Left ventricle myocardium inferior (tissue), 1 donor: ENCODE measurements at regions of chr16 and their contacts with region 1.

Region 1: GRCh38 chr16:17467923-17468540 is 2.7 kb downstream of the XYLT1 start:
- DNase-seq: peak; percentile 54
- H3K4me3 ChIP-seq: no peak overlapping the region
- H3K27ac ChIP-seq: no peak overlapping the region
- H3K4me1 ChIP-seq: peaks cover 24% of the 10 kb centered on the region
- H3K27me3 ChIP-seq: peaks cover 69% of the 10 kb centered on the region
- CTCF ChIP-seq: peak; percentile 70

Region 2: DNA sequence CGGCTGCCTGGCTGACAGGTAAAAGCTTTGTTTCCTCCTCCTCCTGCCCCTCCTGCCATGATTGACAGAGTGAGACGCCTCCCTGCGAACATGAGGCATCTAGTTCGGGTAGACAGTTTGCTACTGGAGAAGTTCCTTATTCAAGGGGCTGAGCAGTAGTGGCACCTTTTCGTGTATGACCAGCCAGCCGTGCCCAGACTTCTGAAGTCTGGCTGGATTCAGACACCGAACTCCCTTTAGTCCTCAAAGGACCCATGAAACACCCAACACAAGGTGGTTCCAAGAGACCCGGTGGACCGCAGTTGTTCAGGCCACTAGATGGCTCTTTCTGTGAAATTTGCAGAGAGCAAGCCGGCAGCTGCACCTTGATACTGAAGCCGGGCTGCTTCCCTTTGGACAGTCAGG is 190.1 kb before region 1 on chr16:
- intact Hi-C with region 1: loop called (anchors 10 kb)
- DNase-seq: no peak
- H3K4me3 ChIP-seq: no peak overlapping the region
- H3K27ac ChIP-seq: no peak overlapping the region
- H3K4me1 ChIP-seq: no peaks in the 10 kb centered on the region
- H3K27me3 ChIP-seq: peaks cover 14% of the 10 kb centered on the region
- CTCF ChIP-seq: peak; percentile 65

Region 3: DNA sequence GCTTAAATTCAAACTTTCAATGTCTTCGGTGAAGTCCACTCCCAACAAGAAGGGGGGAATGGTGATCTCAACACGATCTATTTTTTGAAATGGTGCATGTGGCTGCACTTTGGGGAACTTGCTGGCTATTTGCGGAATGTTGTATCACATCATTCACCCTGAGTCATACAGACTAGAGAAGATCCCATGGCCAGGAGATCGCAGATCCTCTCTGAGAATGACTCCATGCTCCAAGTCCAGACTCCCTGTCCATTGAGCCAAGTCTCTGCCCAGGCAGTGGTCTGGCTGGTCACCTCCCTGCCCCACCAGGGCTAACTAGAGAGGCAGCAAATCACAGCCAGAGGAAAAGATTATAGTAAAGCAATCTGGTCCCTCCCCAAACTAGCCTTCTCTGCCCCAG is 117.8 kb before region 1 on chr16:
- intact Hi-C with region 1: no loop called
- DNase-seq: no peak
- H3K4me3 ChIP-seq: no peak overlapping the region
- H3K27ac ChIP-seq: no peak overlapping the region
- H3K4me1 ChIP-seq: peaks cover 30% of the 10 kb centered on the region
- H3K27me3 ChIP-seq: no peaks in the 10 kb centered on the region
- CTCF ChIP-seq: no peak